ENCODE measurements at regions of chr6 and their contacts with region 1.

Region 1: DNA sequence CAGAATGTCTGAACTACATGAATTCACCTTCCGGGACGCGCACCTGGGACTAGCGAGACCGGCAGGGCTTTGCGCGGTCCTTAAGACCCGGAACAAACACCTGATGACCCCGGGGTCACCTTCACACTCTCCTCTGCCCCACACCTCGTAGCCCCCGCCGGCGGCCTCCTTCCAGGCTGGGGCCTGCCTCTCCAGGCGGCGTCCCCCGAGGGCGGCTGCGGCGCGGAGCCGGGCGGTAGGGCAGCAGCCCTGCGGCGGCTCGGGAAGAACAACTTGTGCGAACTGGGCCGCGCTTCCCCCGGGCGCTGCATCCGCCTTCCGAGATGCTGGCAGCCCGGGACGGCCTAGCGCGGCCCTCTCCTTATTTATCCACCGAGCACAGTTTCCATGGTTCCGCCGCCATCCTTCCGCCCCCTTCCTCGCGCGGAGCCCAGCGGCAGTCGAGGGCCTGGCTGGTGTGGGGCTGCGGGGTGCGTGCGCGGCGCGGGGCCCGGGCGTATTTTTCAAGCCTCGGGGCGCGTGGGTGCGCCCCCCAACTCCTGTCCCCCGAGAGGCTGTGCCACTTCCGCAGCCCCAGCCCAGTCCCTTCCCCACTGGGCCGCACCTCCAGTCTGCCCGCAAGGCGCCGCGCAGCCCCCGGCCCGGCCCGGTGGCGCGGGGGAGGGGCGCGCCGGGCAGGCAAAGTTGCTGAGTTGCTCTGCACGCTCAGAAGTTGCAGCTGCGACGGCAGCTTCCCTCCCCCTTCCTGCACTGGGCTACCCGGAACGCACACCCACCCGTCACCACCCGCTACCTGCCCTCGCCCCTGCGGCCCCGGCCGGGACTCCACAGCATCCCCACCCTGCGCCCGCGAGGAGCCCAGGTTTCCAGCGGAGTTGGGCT is 56.3 kb upstream of the RREB1 start:
- DNase-seq: peak; percentile 52 to 61
- H3K4me3 ChIP-seq: peak overlapping the region; percentile 67
- H3K27ac ChIP-seq: peak overlapping the region; percentile 93
- H3K4me1 ChIP-seq: peaks cover 18% of the 10 kb centered on the region
- H3K27me3 ChIP-seq: no peaks in the 10 kb centered on the region
- CTCF ChIP-seq: no peak

Region 2: DNA sequence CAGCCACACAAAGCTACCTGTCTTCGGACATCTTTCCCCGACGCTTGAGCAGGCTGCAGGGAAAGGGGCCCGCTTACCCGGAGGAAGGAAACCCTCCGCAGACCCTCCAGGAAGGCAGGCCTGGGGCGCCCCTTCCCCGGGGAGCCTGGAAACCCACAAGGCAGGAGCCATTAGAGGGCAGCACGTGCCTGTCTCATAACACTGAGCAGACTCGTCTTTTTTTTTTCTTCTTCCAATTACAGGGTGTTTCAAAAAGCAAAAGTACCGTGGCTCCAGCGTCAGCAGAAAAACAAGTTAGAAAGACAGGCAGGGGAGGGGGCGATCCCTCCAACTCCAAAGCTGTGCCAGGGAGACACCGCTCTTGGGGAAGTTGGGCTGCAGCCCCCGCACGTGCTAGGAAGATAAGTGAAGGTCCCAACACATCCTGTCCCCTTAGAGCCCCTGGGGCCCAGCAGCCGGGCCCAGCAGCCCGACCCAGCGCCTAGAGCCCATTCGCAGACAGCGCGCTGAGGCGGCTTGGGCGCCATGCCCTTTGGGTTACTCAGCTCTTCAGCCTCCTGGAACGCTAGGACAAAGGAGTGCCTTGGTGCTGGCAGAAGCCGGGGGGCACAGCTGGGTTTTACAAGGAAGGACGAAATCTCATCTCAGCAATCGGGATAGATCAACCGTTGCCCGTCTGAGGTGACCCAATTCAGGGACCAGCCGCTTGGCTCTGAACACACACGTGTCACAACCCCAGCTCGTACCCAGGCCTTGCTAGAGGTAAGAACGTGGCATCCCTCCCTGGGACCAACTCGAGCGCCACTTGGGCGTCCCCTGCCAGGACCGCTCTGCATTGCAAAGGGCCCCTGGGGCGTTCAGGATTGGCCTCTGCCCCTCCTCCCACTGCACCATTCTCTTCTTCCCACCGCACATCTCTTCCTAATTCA is 326.7 kb before region 1 on chr6:
- CTCF ChIA-PET with region 1: interaction called, 3 read pairs
- POLR2A ChIA-PET with region 1: no interaction called
- intact Hi-C with region 1: loop called (anchors 10 kb)
- DNase-seq: peak in 1 of 2 experiments; percentile 70
- H3K4me3 ChIP-seq: no peak overlapping the region
- H3K27ac ChIP-seq: no peak overlapping the region
- H3K4me1 ChIP-seq: peaks cover 14% of the 10 kb centered on the region
- H3K27me3 ChIP-seq: no peaks in the 10 kb centered on the region
- CTCF ChIP-seq: peak; percentile 64

Region 3: DNA sequence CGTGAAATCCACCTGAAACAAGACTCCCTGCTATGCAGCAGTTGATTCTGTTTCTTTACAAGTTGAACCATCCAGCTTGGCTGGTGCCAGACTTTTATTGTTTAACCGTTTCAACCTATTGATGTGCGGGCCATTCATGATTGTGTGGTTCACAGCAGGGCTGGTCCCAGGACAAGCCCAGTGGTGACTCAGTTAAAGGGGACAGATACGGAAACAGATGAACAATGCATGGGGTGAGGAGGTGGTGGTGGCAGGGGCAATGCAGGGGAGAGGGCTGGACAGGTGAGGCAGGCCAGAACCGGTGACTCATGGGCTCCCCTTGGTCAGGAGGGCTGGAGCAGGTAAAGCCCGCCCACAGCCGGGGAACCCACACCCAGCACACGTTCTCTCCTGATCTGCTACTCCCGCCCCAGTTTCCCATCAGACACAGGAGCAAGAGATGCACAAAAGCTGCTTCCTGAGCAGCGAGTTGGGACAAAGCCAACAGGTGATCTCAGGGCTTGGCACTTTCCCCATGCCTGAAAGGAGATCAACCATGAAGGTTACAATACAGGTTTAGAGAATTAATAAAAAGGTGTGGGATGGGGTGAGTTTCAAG is 230.7 kb before region 1 on chr6:
- CTCF ChIA-PET with region 1: no interaction called
- POLR2A ChIA-PET with region 1: no interaction called
- intact Hi-C with region 1: loop called (anchors 5 kb)
- DNase-seq: peak; percentile 96 to 97
- H3K4me3 ChIP-seq: no peak overlapping the region
- H3K27ac ChIP-seq: peak overlapping the region; percentile 94
- H3K4me1 ChIP-seq: peaks cover 69% of the 10 kb centered on the region
- H3K27me3 ChIP-seq: no peaks in the 10 kb centered on the region
- CTCF ChIP-seq: no peak

Region 4: GRCh38 chr6:6856538-6857523 is 194.6 kb before region 1 on chr6:
- CTCF ChIA-PET with region 1: no interaction called
- POLR2A ChIA-PET with region 1: no interaction called
- intact Hi-C with region 1: loop called (anchors 1 kb)
- DNase-seq: peak; percentile 80 to 92
- H3K4me3 ChIP-seq: peak overlapping the region; percentile 40; the same call in 1 of the 2 replicates
- H3K27ac ChIP-seq: peak overlapping the region; percentile 96
- H3K4me1 ChIP-seq: peaks cover 32% of the 10 kb centered on the region
- H3K27me3 ChIP-seq: no peaks in the 10 kb centered on the region
- CTCF ChIP-seq: no peak

Region 5: DNA sequence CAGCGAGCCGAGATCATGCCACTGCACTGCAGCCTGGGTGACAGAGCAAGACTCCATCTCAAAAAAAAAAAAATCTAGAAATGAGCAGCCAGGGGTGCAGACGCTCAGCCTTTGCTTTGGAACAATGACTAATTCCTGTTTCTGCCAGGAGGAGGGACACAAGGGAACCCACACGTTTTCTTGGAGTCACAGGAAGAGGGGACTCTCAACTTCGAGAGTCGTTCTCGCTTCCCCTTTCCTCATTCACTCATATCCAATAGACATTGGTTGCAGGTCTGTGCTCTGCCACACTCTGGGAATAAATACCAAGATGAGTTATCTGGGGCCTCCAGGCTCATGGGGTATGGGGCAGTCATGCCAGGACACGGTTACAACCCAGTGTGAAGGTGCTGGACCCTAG is 35.2 kb before region 1 on chr6:
- CTCF ChIA-PET with region 1: no interaction called
- POLR2A ChIA-PET with region 1: no interaction called
- intact Hi-C with region 1: no loop called
- DNase-seq: no peak
- H3K4me3 ChIP-seq: no peak overlapping the region
- H3K27ac ChIP-seq: no peak overlapping the region
- H3K4me1 ChIP-seq: no peaks in the 10 kb centered on the region
- H3K27me3 ChIP-seq: no peaks in the 10 kb centered on the region
- CTCF ChIP-seq: no peak

Region 6: GRCh38 chr6:7035837-7036249 is 15.6 kb before region 1 on chr6:
- CTCF ChIA-PET with region 1: no interaction called
- POLR2A ChIA-PET with region 1: interaction called, 10 read pairs
- intact Hi-C with region 1: no loop called
- DNase-seq: peak in 1 of 2 experiments; percentile 55
- H3K4me3 ChIP-seq: no peak overlapping the region
- H3K27ac ChIP-seq: no peak overlapping the region
- H3K4me1 ChIP-seq: peaks cover 7% of the 10 kb centered on the region; the same call in 1 of the 2 replicates
- H3K27me3 ChIP-seq: no peaks in the 10 kb centered on the region
- CTCF ChIP-seq: no peak

Region 7: DNA sequence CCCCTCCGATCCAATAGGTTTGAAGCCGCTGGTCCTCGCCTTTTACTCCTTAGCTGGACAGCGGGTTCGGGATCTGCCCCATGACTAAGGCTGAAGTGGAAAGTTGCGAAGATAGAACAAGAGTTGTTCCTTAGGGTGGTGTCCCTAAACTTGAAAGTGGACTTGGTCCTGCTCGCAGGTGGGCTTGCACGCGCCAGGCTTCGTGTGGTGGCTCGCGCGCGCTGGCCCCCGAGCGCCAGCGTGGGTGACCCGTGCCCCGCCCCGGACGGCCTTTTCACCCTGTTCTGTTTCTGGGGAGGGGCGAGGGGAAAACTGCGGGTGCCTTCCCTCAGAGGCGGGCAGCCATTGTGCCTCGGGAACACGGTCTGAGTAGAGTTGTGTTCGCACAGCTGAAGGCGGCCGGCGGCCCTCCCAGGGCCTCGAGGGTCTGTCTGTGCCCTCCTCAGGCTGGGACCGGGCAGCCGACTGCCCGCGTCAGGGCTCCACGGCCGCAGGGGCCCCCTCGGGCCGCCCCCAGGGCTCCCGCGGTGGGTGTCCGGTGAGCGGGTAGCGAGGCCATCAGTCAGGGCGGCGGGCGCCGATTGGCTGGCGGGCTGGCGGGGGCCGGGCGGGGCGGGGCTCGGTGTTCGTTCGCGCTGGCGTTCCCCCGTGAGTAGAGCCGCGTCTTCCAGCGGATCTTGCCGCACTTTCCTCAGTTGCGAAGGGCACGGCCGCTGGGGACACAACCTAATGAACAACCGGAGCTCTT is 89.3 kb after region 1 on chr6:
- CTCF ChIA-PET with region 1: no interaction called
- POLR2A ChIA-PET with region 1: interaction called, 12 read pairs
- intact Hi-C with region 1: loop called (anchors 2 kb)
- DNase-seq: peak; percentile 51 to 89
- H3K4me3 ChIP-seq: peak overlapping the region; percentile 56
- H3K27ac ChIP-seq: peak overlapping the region; percentile 68
- H3K4me1 ChIP-seq: peaks cover 63% of the 10 kb centered on the region
- H3K27me3 ChIP-seq: no peaks in the 10 kb centered on the region
- CTCF ChIP-seq: no peak

Region 8: GRCh38 chr6:7238900-7239589 is 187.6 kb after region 1 on chr6:
- CTCF ChIA-PET with region 1: interaction called, 3 read pairs
- POLR2A ChIA-PET with region 1: interaction called, 4 read pairs
- intact Hi-C with region 1: loop called (anchors 2 kb)
- DNase-seq: peak; percentile 53 to 84
- H3K4me3 ChIP-seq: no peak overlapping the region
- H3K27ac ChIP-seq: no peak overlapping the region
- H3K4me1 ChIP-seq: peaks cover 57% of the 10 kb centered on the region
- H3K27me3 ChIP-seq: no peaks in the 10 kb centered on the region
- CTCF ChIP-seq: peak; percentile 67

Measured in PC-9 (cell line).